HepG2 (cell line): ENCODE measurements at regions of chr7 and their contacts with region 1.

Region 1: GRCh38 chr7:78279032-78279431 is 480.5 kb downstream of the PHTF2 start:
- DNase-seq: no peak
- ATAC-seq: no peak
- H3K4me3 ChIP-seq: no peak overlapping the region
- H3K27ac ChIP-seq: no peak overlapping the region
- H3K4me1 ChIP-seq: no peaks in the 10 kb centered on the region
- H3K27me3 ChIP-seq: no peaks in the 10 kb centered on the region
- CTCF ChIP-seq: no peak
- EP300 ChIP-seq: no peak
- POLR2A ChIP-seq: no peak
- RAD21 ChIP-seq: no peak

Region 2: DNA sequence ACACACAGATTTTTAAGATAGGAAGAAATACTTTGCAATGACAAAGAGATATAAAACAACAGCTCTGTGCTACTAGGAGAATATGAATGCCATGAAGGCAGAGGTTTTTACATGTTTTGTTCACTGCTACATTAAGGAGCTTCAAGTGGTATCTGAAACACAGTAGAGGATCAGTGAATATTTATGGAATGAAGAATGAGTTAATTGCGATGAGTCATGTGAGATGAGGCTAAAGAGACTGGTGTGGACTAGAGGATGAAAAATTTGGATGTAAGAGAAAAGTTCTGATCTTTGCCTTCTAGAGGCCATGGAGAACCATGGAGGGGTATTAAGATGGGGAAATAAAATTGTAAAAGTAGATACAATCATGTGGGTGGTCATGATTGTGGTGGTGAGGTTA is 46.2 kb before region 1 on chr7:
- CTCF ChIA-PET with region 1: no interaction called
- POLR2A ChIA-PET with region 1: no interaction called
- in situ Hi-C with region 1: no loop called
- intact Hi-C with region 1: no loop called
- DNase-seq: no peak
- ATAC-seq: no peak
- H3K4me3 ChIP-seq: no peak overlapping the region
- H3K27ac ChIP-seq: no peak overlapping the region
- H3K4me1 ChIP-seq: no peaks in the 10 kb centered on the region
- H3K27me3 ChIP-seq: no peaks in the 10 kb centered on the region
- CTCF ChIP-seq: no peak
- EP300 ChIP-seq: no peak
- POLR2A ChIP-seq: no peak
- RAD21 ChIP-seq: no peak

Region 3: GRCh38 chr7:78247910-78248689 is 30.9 kb before region 1 on chr7:
- CTCF ChIA-PET with region 1: no interaction called
- POLR2A ChIA-PET with region 1: no interaction called
- in situ Hi-C with region 1: no loop called
- intact Hi-C with region 1: loop called (anchors 1 kb)
- DNase-seq: no peak
- ATAC-seq: no peak
- H3K4me3 ChIP-seq: no peak overlapping the region
- H3K27ac ChIP-seq: no peak overlapping the region
- H3K4me1 ChIP-seq: no peaks in the 10 kb centered on the region
- H3K27me3 ChIP-seq: no peaks in the 10 kb centered on the region
- CTCF ChIP-seq: no peak
- EP300 ChIP-seq: no peak
- POLR2A ChIP-seq: no peak
- RAD21 ChIP-seq: no peak